PC-9 (cell line): ENCODE measurements at regions of chr4 and their contacts with region 1.

Region 1: GRCh38 chr4:112153211-112153791 is 8.0 kb downstream of the FAM241A start:
- DNase-seq: no peak
- H3K4me3 ChIP-seq: no peak overlapping the region
- H3K27ac ChIP-seq: no peak overlapping the region
- H3K4me1 ChIP-seq: no peaks in the 10 kb centered on the region; the same call in 1 of the 2 replicates
- H3K27me3 ChIP-seq: no peaks in the 10 kb centered on the region
- CTCF ChIP-seq: no peak

Region 2: GRCh38 chr4:112201915-112202505 is 48.7 kb after region 1 on chr4:
- CTCF ChIA-PET with region 1: interaction called, 15 read pairs
- POLR2A ChIA-PET with region 1: no interaction called
- intact Hi-C with region 1: no loop called
- DNase-seq: no peak
- H3K4me3 ChIP-seq: no peak overlapping the region
- H3K27ac ChIP-seq: no peak overlapping the region
- H3K4me1 ChIP-seq: peaks cover 30% of the 10 kb centered on the region
- H3K27me3 ChIP-seq: no peaks in the 10 kb centered on the region
- CTCF ChIP-seq: no peak

Region 3: GRCh38 chr4:112823606-112824005 is 670.3 kb after region 1 on chr4:
- CTCF ChIA-PET with region 1: no interaction called
- POLR2A ChIA-PET with region 1: no interaction called
- intact Hi-C with region 1: no loop called
- DNase-seq: no peak
- H3K4me3 ChIP-seq: no peak overlapping the region
- H3K27ac ChIP-seq: no peak overlapping the region
- H3K4me1 ChIP-seq: no peaks in the 10 kb centered on the region
- H3K27me3 ChIP-seq: no peaks in the 10 kb centered on the region
- CTCF ChIP-seq: no peak